Activated CD8-positive, alpha-beta memory T cell treated with anti-CD3 and anti-CD28 coated beads, Interleukin-2, amount 10 ng/mL, durations not matched to agents 7 days and 5 days (primary cell): ENCODE measurements at regions of chr14 and their contacts with region 1.

Region 1: GRCh38 chr14:35140718-35141581 is 18.6 kb downstream of the PRORP start:
- DNase-seq: no peak
- ATAC-seq: no peak
- H3K4me3 Mint-ChIP-seq: no peak overlapping the region
- H3K27ac Mint-ChIP-seq: no peak overlapping the region
- H3K4me1 Mint-ChIP-seq: peaks cover 8% of the 10 kb centered on the region
- H3K27me3 Mint-ChIP-seq: no peaks in the 10 kb centered on the region

Region 2: DNA sequence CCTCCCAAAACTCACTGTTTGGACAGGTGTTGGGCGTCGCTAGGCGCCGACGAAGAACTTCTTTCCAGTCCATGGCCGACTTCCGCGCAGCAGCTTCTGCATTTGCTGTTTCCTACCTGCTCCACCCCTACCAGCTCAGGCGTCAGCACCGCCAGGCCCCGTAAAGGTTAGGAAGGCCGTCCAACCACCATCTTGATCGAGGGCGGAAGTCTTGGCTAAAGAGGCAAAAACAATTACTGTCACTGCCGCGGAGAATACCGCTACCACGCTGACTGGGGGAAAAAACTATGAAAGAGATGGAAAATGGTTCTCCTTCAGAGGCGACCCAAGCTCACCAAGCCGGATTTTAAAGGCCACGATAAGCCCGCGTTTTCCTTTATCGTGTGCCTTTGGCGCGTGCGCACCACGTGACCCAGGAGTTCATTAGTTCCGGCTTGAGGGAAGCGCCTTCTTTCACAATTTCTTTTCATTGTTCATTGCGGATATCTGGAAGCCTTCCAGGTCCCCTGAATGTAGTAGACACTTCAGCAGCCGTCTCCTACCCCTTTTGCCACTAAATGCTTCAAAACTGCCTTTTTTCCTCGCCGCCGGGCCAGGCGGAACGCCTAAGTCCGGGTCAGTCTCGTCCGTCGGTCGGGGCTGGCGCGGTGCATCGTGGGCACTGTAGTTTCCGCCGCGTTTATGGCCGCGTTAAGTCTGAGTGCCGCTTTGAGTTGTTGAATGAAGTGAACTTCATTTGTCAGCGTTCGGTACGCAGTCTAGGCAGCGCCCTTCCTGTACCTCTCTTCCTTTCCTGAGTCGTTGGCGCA is 18.9 kb before region 1 on chr14 and contains the starts of genes PPP2R3C and PRORP:
- CTCF ChIA-PET with region 1: interaction called, 11 read pairs
- DNase-seq: peak; percentile 97
- ATAC-seq: peak; percentile 90
- H3K4me3 Mint-ChIP-seq: peak within 1 kb of the TSS; percentile 94
- H3K27ac Mint-ChIP-seq: peak within 1 kb of the TSS; percentile 99
- H3K4me1 Mint-ChIP-seq: peaks cover 56% of the 10 kb centered on the region
- H3K27me3 Mint-ChIP-seq: no peaks in the 10 kb centered on the region
- total RNA-seq, gene PPP2R3C: 38.9 to 47.1 TPM
- total RNA-seq, gene PRORP: 28.0 to 31.3 TPM

Region 3: DNA sequence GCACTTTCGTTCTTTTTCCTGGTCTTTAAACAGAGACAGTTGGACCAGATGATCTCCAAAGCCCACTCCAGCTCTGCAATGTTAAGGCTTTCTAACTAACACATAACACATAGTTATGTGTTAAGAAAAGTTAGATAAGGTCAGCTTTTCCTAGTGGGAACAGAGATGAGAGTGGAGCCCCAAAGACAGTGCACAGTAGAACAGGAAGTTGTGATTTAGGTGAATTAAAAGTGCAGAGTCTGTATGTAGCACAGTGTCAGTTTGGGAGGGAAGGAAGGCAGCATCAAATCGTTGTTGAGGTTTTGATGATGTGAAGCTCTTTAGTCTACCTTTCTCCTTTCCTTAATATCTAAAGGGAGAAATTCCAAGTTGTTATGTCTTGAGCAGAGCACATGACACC is 13.1 kb after region 1 on chr14:
- CTCF ChIA-PET with region 1: interaction called, 15 read pairs
- DNase-seq: no peak
- ATAC-seq: no peak
- H3K4me3 Mint-ChIP-seq: no peak overlapping the region
- H3K27ac Mint-ChIP-seq: no peak overlapping the region
- H3K4me1 Mint-ChIP-seq: peaks cover 16% of the 10 kb centered on the region
- H3K27me3 Mint-ChIP-seq: no peaks in the 10 kb centered on the region

Region 4: DNA sequence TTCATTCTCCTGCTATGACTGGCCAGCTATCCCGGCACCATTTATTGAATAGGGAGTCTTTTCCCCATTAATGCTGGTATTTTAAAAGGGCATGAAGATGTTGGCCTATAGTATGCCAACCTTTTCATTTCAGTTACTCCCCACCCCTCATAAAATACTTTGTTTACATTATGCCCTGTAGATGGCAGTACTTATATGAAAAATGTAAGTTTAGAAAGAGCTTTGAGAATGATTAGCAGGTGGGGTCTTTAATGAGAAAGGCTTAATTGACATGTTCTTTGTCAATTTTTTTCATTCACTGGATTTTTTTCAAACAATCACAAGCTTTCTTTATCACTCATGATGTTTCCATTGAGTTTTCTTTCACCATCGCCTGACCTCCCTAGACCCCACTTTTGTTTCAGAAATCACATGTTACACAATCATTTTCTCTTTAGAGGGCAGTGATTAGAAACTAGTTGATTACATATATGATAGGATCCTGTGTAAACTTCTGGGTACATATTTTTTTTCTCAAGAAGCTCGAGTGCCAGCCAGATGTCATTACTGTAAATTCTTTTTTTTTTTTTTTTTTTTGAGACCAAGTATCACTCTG is 88.6 kb after region 1 on chr14:
- CTCF ChIA-PET with region 1: interaction called, 20 read pairs
- DNase-seq: no peak
- ATAC-seq: peak; percentile 57
- H3K4me3 Mint-ChIP-seq: no peak overlapping the region
- H3K27ac Mint-ChIP-seq: peak overlapping the region; percentile 39
- H3K4me1 Mint-ChIP-seq: peaks cover 20% of the 10 kb centered on the region
- H3K27me3 Mint-ChIP-seq: no peaks in the 10 kb centered on the region

Region 5: GRCh38 chr14:35416108-35416750 is 275.3 kb after region 1 on chr14:
- CTCF ChIA-PET with region 1: interaction called, 98 read pairs
- DNase-seq: peak; percentile 80
- ATAC-seq: peak; percentile 45
- H3K4me3 Mint-ChIP-seq: peak overlapping the region; percentile 56
- H3K27ac Mint-ChIP-seq: peak overlapping the region; percentile 86
- H3K4me1 Mint-ChIP-seq: peaks cover 48% of the 10 kb centered on the region
- H3K27me3 Mint-ChIP-seq: peaks cover 9% of the 10 kb centered on the region